ENCODE measurements at regions of chrX and their contacts with region 1.

Region 1: GRCh38 chrX:85052636-85053343 is 49.1 kb downstream of the APOOL start:
- DNase-seq: peak; percentile 51
- H3K4me3 Mint-ChIP-seq: peak overlapping the region; percentile 26
- H3K27ac Mint-ChIP-seq: peak overlapping the region; percentile 84
- H3K4me1 Mint-ChIP-seq: peaks cover 8% of the 10 kb centered on the region
- H3K27me3 Mint-ChIP-seq: peaks cover 16% of the 10 kb centered on the region
- CTCF ChIP-seq: peak; percentile 31

Region 2: GRCh38 chrX:83860846-83861245 is 1191.9 kb before region 1 on chrX and contains the start of gene CYLC1:
- CTCF ChIA-PET with region 1: no interaction called
- POLR2A ChIA-PET with region 1: no interaction called
- intact Hi-C with region 1: no loop called
- DNase-seq: no peak
- H3K4me3 Mint-ChIP-seq: no peak within 1 kb of the TSS
- H3K27ac Mint-ChIP-seq: no peak within 1 kb of the TSS
- H3K4me1 Mint-ChIP-seq: no peaks in the 10 kb centered on the region
- H3K27me3 Mint-ChIP-seq: no peaks in the 10 kb centered on the region
- CTCF ChIP-seq: no peak
- total RNA-seq, gene CYLC1: not detected in 2 replicates

Region 3: DNA sequence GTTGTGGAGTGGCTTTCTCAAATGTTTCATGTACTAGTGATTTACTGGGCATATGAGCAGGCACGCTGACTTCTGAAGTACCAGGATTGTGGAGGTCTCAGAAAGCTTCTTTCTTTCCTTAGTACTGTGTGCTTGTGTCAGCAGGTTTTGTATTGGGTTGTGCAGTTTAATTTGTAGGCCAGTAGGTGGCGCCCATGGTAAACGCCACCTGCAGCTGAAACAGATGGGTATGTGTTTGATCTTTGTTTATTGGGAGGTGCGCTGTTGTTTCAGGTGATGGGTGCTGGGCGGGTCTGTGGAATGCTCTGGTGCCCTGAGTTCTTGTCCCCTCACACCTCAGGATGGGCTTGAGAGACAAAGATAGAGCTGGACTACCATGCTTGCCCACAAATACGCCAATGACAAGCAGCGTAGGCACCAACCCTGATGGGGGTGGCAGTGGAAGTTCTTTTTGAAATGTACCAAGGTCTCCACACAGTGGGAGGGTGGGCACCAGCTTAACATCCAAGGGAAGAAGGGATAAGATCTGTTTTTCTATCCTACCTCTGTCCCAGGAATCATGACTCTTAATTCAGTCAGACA is 1006.3 kb before region 1 on chrX:
- CTCF ChIA-PET with region 1: interaction called, 4 read pairs
- POLR2A ChIA-PET with region 1: no interaction called
- intact Hi-C with region 1: loop called (anchors 5 kb)
- DNase-seq: peak; percentile 48
- H3K4me3 Mint-ChIP-seq: no peak overlapping the region
- H3K27ac Mint-ChIP-seq: no peak overlapping the region
- H3K4me1 Mint-ChIP-seq: no peaks in the 10 kb centered on the region
- H3K27me3 Mint-ChIP-seq: no peaks in the 10 kb centered on the region
- CTCF ChIP-seq: peak; percentile 82

Region 4: DNA sequence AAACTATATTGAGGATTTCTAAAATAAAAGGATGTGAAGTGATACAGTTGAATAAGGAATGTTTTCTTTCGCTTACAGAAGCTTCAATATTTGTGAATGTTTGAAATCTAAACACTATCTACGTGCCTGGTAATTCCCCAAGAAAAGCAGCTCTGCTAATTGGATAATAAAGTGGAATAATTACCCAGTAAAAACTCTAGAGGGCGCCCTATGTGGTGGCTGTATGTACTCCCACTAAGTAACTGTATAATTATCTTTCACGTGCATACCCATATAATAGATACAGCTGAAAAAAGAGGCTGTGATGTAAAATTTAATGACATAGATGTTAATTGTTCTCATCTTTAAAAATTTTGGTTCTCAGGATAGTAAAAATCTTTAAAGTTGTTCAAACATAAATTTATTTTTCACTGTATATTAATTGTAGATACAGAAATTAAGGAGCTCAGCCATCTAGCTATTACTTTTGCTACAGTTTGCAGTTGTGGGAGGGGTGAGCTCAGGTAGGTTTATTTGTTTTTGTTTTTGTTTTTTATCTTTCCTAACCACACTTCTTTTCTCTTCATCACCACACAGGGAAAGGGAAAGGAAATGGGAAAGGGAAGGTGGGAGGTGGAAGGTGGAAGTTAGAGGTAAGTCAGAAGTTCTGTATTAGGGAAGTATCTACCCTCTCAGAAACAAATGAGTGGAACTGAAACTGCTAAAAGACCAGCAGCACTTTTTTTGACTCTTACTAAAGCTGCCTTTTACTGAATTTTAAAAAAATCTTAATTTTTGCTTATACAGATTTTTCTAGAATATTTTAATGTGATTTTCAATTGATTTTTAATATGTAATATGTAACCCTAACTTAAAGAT is 713.1 kb before region 1 on chrX:
- CTCF ChIA-PET with region 1: no interaction called
- POLR2A ChIA-PET with region 1: no interaction called
- intact Hi-C with region 1: loop called (anchors 10 kb)
- DNase-seq: peak; percentile 31
- H3K4me3 Mint-ChIP-seq: no peak overlapping the region
- H3K27ac Mint-ChIP-seq: no peak overlapping the region
- H3K4me1 Mint-ChIP-seq: no peaks in the 10 kb centered on the region
- H3K27me3 Mint-ChIP-seq: peaks cover 12% of the 10 kb centered on the region
- CTCF ChIP-seq: peak; percentile 63

Region 5: DNA sequence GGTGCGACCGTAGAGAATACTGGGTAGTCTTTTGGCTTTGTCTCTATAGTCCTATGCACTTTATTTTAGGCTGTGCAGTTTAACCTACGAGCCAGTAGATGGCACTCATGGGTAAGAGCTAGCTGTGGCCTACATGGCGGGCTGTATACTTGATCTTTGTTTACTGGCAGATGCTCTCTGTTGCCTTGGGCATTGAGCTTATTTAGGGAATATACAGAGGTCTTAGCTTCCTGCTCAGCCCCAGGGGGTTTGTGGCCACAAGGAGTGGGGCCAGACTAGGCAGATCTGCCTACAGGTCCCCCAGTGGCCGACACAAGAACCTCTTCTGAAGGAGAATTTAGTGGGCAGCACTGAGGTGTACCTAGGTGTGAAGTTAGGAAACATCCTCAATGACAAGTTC is 323.0 kb before region 1 on chrX:
- CTCF ChIA-PET with region 1: interaction called, 18 read pairs
- POLR2A ChIA-PET with region 1: interaction called, 3 read pairs
- intact Hi-C with region 1: loop called (anchors 1 kb)
- DNase-seq: peak; percentile 43
- H3K4me3 Mint-ChIP-seq: no peak overlapping the region
- H3K27ac Mint-ChIP-seq: no peak overlapping the region
- H3K4me1 Mint-ChIP-seq: no peaks in the 10 kb centered on the region
- H3K27me3 Mint-ChIP-seq: no peaks in the 10 kb centered on the region
- CTCF ChIP-seq: peak; percentile 84

Region 6: GRCh38 chrX:84907324-84907968 is 145.3 kb before region 1 on chrX:
- CTCF ChIA-PET with region 1: interaction called, 8 read pairs
- POLR2A ChIA-PET with region 1: no interaction called
- intact Hi-C with region 1: loop called (anchors 1 kb)
- DNase-seq: peak; percentile 33
- H3K4me3 Mint-ChIP-seq: no peak overlapping the region
- H3K27ac Mint-ChIP-seq: peak overlapping the region; percentile 35
- H3K4me1 Mint-ChIP-seq: no peaks in the 10 kb centered on the region
- H3K27me3 Mint-ChIP-seq: no peaks in the 10 kb centered on the region
- CTCF ChIP-seq: peak; percentile 25

Region 7: DNA sequence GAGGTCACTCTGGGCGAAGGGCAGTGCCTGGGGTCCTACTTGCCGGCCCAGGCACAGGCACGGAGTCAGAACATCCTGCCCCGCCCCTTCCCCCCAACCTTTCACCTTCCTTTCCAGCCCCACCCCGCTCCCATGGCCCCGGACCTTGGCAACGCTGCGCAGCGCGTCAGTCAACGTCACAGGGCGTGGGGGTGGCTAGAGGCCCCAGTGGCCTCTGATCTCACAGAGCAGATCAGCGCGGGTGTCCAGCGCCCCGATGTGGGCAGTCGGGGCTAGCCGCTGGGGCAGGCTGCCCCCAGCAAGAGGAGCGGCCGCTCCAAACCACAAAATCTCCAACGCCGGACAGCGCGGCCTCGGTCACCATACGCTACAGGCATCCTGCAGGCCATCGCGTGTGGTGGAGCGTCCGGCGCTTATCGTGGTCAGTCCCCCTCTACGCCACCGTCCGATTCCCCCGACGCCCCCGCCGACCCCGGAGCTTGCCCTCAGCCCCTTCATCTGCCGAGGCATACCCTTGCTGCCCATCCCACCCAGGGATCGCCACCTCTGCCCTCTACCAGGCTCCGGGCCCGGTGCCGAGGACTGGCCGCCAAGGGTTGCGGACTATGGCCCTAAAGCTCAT is 118.7 kb before region 1 on chrX:
- CTCF ChIA-PET with region 1: no interaction called
- POLR2A ChIA-PET with region 1: no interaction called
- intact Hi-C with region 1: no loop called
- DNase-seq: no peak
- H3K4me3 Mint-ChIP-seq: no peak overlapping the region
- H3K27ac Mint-ChIP-seq: no peak overlapping the region
- H3K4me1 Mint-ChIP-seq: no peaks in the 10 kb centered on the region
- H3K27me3 Mint-ChIP-seq: no peaks in the 10 kb centered on the region
- CTCF ChIP-seq: no peak

Region 8: GRCh38 chrX:85003655-85004244 is 49.0 kb before region 1 on chrX and contains the start of gene APOOL:
- CTCF ChIA-PET with region 1: interaction called, 3 read pairs
- POLR2A ChIA-PET with region 1: interaction called, 3 read pairs
- intact Hi-C with region 1: loop called (anchors 2 kb)
- DNase-seq: peak; percentile 89
- H3K4me3 Mint-ChIP-seq: peak within 1 kb of the TSS; percentile 78
- H3K27ac Mint-ChIP-seq: peak within 1 kb of the TSS; percentile 80
- H3K4me1 Mint-ChIP-seq: peaks cover 5% of the 10 kb centered on the region
- H3K27me3 Mint-ChIP-seq: no peaks in the 10 kb centered on the region
- CTCF ChIP-seq: no peak
- total RNA-seq, gene APOOL: 26.3 and 33.8 TPM in 2 replicates